HCT116 (cell line): ENCODE measurements at regions of chr7 and their contacts with region 1.

Region 1: DNA sequence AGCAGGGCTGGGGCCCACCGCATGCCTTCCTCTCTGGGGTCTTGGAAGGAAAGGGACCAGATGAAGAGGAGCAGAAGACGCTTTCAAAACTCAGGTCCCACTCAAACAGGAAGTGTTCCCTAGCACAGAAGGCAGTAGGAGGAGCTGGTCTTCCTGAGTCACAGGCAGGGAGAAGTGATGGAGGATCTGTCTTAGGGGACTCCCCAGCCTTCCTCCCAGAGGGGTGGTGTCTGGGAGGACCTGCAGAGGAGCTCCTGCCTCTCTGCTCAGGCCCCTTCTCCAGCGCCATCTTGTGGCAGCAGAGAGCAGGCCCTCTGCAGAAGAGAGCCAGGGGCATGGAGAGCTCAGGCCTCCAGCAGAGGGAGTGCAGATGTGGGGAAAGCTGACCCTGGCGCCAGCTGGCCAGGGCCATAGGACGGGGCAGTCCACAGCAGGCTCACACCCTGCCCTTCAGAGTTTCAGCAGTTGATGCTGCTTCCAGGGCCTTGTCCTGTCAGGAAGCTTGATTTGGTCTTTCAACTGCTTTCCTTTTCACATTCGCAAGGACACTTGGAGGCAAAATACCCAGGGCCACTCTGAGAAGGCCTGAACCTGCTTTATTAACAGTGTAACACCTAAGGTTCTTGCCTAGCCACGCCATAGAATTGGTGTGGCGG is 62.2 kb upstream of the TARP start:
- DNase-seq: peak; percentile 73
- ATAC-seq: peak; percentile 94
- H3K4me3 ChIP-seq: no peak overlapping the region
- H3K27ac ChIP-seq: no peak overlapping the region
- H3K4me1 ChIP-seq: peaks cover 7 to 25% of the 10 kb centered on the region in 2 experiments; a peak in 3 of 4 replicates
- H3K27me3 ChIP-seq: no peaks in the 10 kb centered on the region
- CTCF ChIP-seq: peak; percentile 99 to 100 (median 99)
- POLR2A ChIP-seq: no peak
- RAD21 ChIP-seq: peak; percentile 80

Region 2: DNA sequence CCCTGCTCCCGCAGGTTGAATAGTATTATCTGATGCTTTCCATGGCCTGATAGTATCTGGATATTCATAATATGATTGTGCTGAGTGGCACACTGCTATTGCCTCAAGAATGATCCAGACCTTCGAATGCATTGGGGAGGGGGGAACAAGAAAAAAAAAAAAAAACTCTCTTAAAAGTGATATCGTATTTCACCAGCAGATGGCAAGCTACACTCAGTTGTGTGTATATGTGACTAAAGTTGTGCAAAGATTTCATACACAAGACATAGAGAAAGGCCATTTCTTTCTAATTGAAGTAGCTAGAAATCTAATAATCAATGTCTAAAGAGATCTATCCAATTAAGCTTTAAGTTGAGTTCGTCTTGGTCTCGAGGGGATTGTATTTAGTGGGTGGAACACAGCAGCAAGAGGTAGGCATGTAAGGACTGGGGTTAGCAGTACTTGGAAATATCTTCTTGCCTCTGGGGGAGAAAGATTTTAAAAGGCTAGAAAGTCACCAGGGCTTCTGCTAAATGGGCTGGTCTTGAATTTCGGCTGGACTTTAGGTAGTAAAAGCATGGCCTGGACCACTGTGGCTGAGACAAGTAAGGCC is 434.3 kb before region 1 on chr7:
- CTCF ChIA-PET with region 1: interaction called, 18 read pairs
- POLR2A ChIA-PET with region 1: no interaction called
- RAD21 ChIA-PET with region 1: no interaction called
- intact Hi-C with region 1: no loop called
- DNase-seq: peak; percentile 13
- ATAC-seq: peak; percentile 55; the same call in 1 of the 2 replicates
- H3K4me3 ChIP-seq: no peak overlapping the region
- H3K27ac ChIP-seq: no peak overlapping the region
- H3K4me1 ChIP-seq: peaks cover 0 to 4% of the 10 kb centered on the region in 2 experiments; a peak in 1 of 4 replicates
- H3K27me3 ChIP-seq: no peaks in the 10 kb centered on the region
- CTCF ChIP-seq: peak; percentile 32 to 71 (median 50); a peak in 3 of 6 replicates
- POLR2A ChIP-seq: no peak
- RAD21 ChIP-seq: peak; percentile 65

Region 3: DNA sequence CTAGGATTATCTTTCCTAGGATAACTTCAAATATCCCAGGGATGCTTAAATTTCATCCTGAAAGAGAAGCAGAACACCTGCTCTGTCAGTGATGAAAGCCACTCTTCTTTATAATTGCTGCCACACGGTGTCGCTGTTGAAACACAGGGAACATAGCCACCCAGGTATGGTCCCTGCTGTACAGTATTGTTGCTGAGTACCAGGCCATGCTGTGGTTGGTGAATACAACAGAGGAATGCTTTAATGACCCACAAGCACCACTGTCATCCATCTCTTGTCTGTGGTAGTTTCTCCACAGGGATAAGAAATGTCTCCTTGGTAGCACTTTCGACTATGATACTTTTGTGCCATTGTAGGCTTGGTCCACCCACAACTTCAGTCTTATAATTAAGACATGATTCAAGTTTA is 228.1 kb before region 1 on chr7:
- CTCF ChIA-PET with region 1: interaction called, 19 read pairs
- POLR2A ChIA-PET with region 1: no interaction called
- RAD21 ChIA-PET with region 1: no interaction called
- intact Hi-C with region 1: loop called (anchors 1 kb)
- DNase-seq: peak; percentile 48
- ATAC-seq: peak; percentile 94
- H3K4me3 ChIP-seq: no peak overlapping the region
- H3K27ac ChIP-seq: no peak overlapping the region
- H3K4me1 ChIP-seq: no peaks in the 10 kb centered on the region
- H3K27me3 ChIP-seq: peaks cover 20% of the 10 kb centered on the region
- CTCF ChIP-seq: peak; percentile 79 to 89 (median 79)
- POLR2A ChIP-seq: no peak
- RAD21 ChIP-seq: peak; percentile 72

Region 4: GRCh38 chr7:38215735-38216670 is 119.6 kb before region 1 on chr7:
- CTCF ChIA-PET with region 1: interaction called, 49 read pairs
- POLR2A ChIA-PET with region 1: no interaction called
- RAD21 ChIA-PET with region 1: interaction called, 3 to 4 read pairs
- intact Hi-C with region 1: loop called (anchors 5 kb)
- DNase-seq: peak; percentile 31
- ATAC-seq: peak; percentile 98
- H3K4me3 ChIP-seq: no peak overlapping the region
- H3K27ac ChIP-seq: no peak overlapping the region
- H3K4me1 ChIP-seq: no peaks in the 10 kb centered on the region
- H3K27me3 ChIP-seq: no peaks in the 10 kb centered on the region
- CTCF ChIP-seq: peak; percentile 71 to 98 (median 97)
- POLR2A ChIP-seq: no peak
- RAD21 ChIP-seq: peak; percentile 68

Region 5: DNA sequence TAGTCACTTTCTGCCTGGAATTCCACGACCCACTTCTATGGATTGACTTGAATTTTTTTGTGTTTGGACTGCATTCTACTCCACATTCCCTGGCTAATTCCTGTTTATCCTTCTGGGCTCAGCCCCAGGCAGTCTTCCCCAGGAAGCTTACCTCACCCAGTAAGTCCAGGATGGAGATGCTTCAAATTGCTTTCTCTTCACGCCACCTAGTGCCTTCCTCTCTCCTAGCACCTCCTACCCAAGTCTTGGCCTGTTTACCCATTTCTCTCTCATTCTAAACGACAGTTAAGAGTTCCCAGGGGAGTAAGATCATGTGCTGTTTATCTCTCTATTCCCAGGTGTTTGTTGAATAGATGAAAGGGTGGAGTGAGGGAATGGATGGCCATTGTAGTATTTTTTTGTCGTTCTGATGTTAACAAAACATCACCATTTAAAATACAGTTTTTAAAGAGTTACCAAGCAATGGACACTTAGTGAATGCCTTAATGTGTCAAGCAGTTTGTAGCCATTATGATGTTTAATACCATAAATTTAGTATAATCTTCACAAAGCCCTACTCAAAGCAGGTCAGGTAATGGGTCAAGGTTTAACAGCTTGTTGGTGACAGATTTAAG is 16.7 kb before region 1 on chr7:
- CTCF ChIA-PET with region 1: interaction called, 27 read pairs
- POLR2A ChIA-PET with region 1: interaction called, 4 read pairs
- RAD21 ChIA-PET with region 1: no interaction called
- intact Hi-C with region 1: no loop called
- DNase-seq: peak; percentile 40
- ATAC-seq: peak; percentile 95
- H3K4me3 ChIP-seq: no peak overlapping the region
- H3K27ac ChIP-seq: no peak overlapping the region
- H3K4me1 ChIP-seq: peaks cover 4 to 10% of the 10 kb centered on the region in 2 experiments; a peak in 2 of 4 replicates
- H3K27me3 ChIP-seq: 0 out of 2 replicates have a peak, but pooled peaks cover 6% of the 10 kb centered on the region
- CTCF ChIP-seq: peak; percentile 50 to 78 (median 70)
- POLR2A ChIP-seq: no peak
- RAD21 ChIP-seq: peak; percentile 72

Region 6: GRCh38 chr7:38360776-38361175 is 25.2 kb after region 1 on chr7:
- CTCF ChIA-PET with region 1: interaction called, 10 read pairs
- POLR2A ChIA-PET with region 1: no interaction called
- RAD21 ChIA-PET with region 1: no interaction called
- intact Hi-C with region 1: no loop called
- DNase-seq: no peak
- ATAC-seq: no peak
- H3K4me3 ChIP-seq: no peak overlapping the region
- H3K27ac ChIP-seq: no peak overlapping the region
- H3K4me1 ChIP-seq: no peaks in the 10 kb centered on the region
- H3K27me3 ChIP-seq: no peaks in the 10 kb centered on the region
- CTCF ChIP-seq: no peak
- POLR2A ChIP-seq: no peak
- RAD21 ChIP-seq: no peak

Region 7: DNA sequence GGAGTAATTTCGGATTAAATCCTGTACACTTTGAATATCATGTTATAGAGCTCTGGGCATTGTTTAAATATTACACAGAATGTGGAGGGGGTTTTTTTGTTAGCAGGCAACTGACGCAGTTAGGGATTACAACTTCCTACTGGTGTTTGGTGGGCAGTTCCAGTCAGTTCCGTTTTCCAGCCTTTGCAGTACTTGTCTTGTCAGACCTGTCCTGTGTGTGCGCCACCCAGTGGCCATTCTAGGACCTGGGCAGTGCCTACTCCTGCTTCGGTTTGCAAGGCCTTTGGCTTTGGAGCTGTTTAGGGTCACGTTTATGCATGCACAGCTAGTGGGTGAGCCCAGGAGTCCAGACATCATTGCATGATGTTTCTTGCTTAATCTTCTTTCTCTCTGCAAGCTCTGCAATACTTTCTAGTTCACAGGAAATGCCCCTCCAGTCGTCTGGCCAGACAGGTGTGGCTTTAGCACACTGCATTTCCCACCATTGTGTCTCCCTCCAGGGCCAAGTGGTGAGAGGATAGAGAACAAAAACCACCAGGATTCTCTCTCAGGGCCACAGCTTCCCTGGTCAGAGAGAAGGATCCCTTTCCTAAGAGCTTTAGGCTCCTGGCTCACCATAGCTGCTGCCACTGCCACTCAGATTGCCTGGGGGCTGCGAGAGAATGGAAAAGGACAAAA is 34.3 kb after region 1 on chr7:
- CTCF ChIA-PET with region 1: interaction called, 33 read pairs
- POLR2A ChIA-PET with region 1: no interaction called
- RAD21 ChIA-PET with region 1: no interaction called
- intact Hi-C with region 1: no loop called
- DNase-seq: peak; percentile 80
- ATAC-seq: peak; percentile 91
- H3K4me3 ChIP-seq: no peak overlapping the region
- H3K27ac ChIP-seq: no peak overlapping the region
- H3K4me1 ChIP-seq: peaks cover 0 to 7% of the 10 kb centered on the region in 2 experiments; a peak in 2 of 4 replicates
- H3K27me3 ChIP-seq: no peaks in the 10 kb centered on the region
- CTCF ChIP-seq: peak; percentile 63 to 95 (median 94); a peak in 5 of 6 replicates
- POLR2A ChIP-seq: no peak
- RAD21 ChIP-seq: peak; percentile 20; the same call in 1 of the 2 replicates